ENCODE measurements at regions of chr1 and their contacts with region 1.

Region 1: DNA sequence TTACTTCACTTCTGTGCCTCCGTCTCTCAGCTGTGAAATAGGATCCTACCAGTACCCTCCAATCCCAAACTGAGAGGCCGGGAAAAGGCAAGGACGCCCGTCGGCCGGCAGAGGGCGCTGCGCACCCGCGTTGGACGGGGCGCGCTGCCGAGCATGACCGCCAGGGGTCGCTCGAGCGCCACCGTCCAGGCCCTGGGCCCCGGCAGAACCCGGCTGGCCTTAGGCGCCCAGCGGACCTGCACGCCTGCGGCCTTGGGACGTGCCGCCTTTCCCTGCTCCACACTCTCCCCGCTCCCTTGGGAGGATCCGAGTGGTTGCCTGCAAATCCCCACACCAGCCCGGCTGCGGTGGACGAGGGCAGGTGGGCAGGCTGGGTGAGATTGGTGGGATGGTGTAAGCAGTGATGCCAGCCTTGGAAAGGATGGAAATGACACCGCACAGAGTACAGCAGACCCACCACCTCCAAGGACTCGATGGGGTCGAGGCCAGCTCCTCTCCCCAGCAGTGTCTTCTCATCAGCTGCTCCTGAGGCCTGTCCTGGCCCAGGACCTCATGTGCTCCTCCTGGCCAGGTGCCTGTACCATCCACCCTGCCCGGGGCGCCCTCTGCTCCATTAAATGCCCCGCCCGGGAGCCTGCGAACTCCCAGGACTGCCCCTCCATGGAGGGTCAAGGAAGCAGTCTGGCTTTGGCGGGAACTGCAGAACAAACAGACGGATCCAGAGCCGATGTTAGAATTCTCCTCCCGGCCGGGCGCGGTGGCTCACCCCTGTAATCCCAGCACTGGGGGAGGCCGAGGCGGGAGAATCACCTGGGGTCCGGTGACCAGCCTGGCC is 47.4 kb upstream of the LBR start:
- DNase-seq: peak; percentile 74
- H3K4me3 ChIP-seq: no peak overlapping the region
- H3K27ac ChIP-seq: no peak overlapping the region
- H3K4me1 ChIP-seq: no peaks in the 10 kb centered on the region
- H3K27me3 ChIP-seq: no peaks in the 10 kb centered on the region
- CTCF ChIP-seq: peak; percentile 100

Region 2: GRCh38 chr1:225652729-225653462 is 177.7 kb after region 1 on chr1 and contains the start of gene ENAH:
- CTCF ChIA-PET with region 1: no interaction called
- POLR2A ChIA-PET with region 1: no interaction called
- intact Hi-C with region 1: loop called (anchors 5 kb)
- DNase-seq: peak; percentile 92
- H3K4me3 ChIP-seq: peak within 1 kb of the TSS; percentile 85
- H3K27ac ChIP-seq: peak within 1 kb of the TSS; percentile 96
- H3K4me1 ChIP-seq: peaks cover 41% of the 10 kb centered on the region
- H3K27me3 ChIP-seq: no peaks in the 10 kb centered on the region
- CTCF ChIP-seq: no peak
- total RNA-seq, gene ENAH: 171 and 186 TPM in 2 replicates

Region 3: DNA sequence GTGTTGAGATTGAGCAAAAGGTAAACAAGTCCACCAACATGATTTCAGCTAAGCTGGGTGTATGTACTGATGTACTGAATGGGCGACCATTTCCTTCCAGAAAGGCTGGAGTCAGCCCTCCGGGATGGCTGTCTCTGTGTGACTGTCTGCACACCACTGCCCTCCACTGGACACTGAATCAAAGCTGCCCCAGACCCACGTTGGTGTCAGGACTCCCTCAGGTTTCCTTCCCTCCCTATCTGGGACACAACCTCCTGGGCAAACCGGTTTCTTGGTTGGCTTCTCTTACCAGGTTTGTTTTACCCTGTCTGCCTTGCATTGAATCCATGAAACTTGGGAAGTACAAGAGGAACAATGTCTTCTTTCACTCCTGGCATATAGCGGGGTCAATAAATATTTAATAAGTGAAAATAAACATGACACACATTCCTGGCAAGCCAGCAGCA is 297.1 kb after region 1 on chr1:
- CTCF ChIA-PET with region 1: interaction called, 12 read pairs
- POLR2A ChIA-PET with region 1: no interaction called
- intact Hi-C with region 1: loop called (anchors 1 kb)
- DNase-seq: peak; percentile 92
- H3K4me3 ChIP-seq: no peak overlapping the region
- H3K27ac ChIP-seq: no peak overlapping the region
- H3K4me1 ChIP-seq: peaks cover 28% of the 10 kb centered on the region
- H3K27me3 ChIP-seq: no peaks in the 10 kb centered on the region
- CTCF ChIP-seq: peak; percentile 90

Region 4: DNA sequence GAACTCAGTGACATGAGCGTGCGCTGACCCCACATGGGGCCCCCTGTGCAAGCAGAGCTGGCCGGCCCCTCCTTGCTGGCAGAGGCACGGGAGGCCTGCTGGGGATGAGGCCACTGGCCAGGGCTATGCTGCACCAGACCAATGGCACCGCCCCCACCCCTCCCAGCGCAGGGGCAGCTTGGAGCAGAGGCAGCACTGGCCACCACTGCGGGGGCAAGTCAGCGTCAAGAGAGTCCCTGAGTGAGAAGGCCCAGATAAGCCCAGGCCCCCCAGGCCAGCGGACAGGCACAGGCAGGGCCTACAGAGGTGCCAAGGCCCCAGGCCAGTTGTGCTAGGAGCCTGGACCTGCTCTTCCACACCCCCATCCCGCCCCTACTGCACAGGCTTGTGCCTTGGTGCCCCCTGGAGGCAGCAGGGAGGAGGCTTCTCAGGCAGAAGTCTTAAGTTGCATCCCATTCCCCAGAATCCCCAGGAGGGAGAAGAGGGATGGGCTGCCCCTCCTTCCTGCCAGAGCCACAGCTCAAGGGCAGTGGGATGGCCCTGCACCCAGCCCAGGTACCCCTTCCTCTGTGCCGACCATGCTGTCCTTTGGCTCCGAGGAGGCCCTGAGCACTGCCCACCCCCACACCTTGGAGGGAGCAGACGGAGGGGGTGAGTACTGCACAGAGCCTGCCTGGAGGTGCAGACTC is 370.5 kb after region 1 on chr1:
- CTCF ChIA-PET with region 1: no interaction called
- POLR2A ChIA-PET with region 1: no interaction called
- intact Hi-C with region 1: loop called (anchors 1 kb)
- DNase-seq: peak; percentile 87
- H3K4me3 ChIP-seq: no peak overlapping the region
- H3K27ac ChIP-seq: no peak overlapping the region
- H3K4me1 ChIP-seq: no peaks in the 10 kb centered on the region
- H3K27me3 ChIP-seq: no peaks in the 10 kb centered on the region
- CTCF ChIP-seq: peak; percentile 85

Region 5: DNA sequence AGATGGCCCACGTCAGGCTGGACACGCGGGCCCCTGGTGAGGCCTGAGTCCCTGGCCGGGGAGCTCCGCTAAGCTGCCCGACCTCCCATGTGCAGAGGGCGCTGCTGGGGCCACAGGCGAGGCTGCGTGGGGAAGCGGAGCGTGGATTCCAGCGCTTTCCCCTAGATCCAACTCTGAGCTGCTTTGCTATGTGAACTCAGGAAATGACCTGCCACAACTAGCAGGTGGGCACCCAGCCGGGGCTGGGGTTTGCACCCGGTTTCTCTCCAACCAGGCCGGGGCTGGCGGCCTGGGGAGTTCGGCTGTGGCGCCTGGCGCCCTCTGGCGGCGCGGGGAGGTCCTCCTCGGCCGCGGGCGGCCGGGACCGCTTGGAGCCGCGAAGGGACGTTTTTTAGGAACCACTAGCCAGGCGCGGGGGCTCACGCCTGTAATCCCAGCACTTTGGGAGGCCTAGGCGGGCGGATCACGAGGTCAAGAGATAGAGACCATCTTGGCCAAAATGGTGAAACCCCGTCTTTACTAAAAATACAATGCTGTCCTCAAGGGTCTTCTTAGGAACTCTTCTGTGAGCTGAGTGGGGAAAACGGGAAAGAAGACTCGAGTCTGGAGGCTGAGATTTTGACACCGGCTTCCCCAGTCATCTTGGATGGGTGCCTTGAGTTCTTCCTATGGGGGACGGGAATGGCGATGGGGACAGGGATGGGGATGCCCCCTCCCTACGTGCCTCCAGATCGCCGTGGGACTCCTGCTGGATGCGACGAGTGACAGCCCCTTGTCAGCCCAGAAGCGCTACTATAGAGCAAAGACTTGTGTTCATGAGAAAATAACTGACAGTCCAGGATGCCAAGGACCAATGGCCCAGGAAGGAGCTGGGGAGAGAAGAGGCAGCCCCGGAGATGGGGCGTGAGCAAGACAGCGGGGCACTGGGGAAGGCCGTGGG is 436.3 kb after region 1 on chr1:
- CTCF ChIA-PET with region 1: interaction called, 3 read pairs
- POLR2A ChIA-PET with region 1: no interaction called
- intact Hi-C with region 1: loop called (anchors 1 kb)
- DNase-seq: peak; percentile 67
- H3K4me3 ChIP-seq: no peak overlapping the region
- H3K27ac ChIP-seq: no peak overlapping the region
- H3K4me1 ChIP-seq: no peaks in the 10 kb centered on the region
- H3K27me3 ChIP-seq: no peaks in the 10 kb centered on the region
- CTCF ChIP-seq: peak; percentile 73

Region 6: GRCh38 chr1:225977937-225978748 is 502.9 kb after region 1 on chr1:
- CTCF ChIA-PET with region 1: no interaction called
- POLR2A ChIA-PET with region 1: no interaction called
- intact Hi-C with region 1: loop called (anchors 1 kb)
- DNase-seq: no peak
- H3K4me3 ChIP-seq: no peak overlapping the region
- H3K27ac ChIP-seq: no peak overlapping the region
- H3K4me1 ChIP-seq: no peaks in the 10 kb centered on the region
- H3K27me3 ChIP-seq: no peaks in the 10 kb centered on the region
- CTCF ChIP-seq: no peak